HepG2 (cell line): ENCODE measurements at regions of chr5 and their contacts with region 1.

Region 1: DNA sequence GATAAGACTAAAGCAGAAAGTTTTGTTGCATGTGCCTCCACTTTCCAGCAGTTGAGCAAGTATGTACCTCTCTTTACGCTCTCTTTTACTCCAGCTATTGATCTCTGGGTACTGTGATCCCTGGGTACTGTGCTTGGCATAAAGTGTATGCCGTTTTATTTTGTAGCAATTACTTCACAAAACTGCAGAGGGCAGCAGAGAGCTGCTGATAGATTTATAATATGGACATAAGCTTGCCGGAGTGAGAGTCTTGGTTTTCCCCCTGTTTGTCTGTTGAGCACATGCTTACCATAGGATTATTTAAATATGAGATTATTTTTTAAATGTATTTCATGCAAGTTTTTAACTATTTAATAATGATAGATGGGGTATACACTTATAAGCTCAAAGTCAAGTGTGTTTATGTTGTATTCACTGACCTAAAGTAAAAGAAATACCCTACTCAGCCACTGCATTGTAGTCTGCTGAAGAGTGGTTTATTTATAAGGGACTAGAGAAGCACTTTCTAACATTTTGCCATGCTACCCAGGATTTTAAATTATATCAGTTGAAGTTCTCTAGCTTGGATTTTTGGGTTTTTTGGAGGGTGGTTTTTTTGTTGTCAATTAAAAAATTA is 13.0 kb downstream of the TTC1 start:
- DNase-seq: peak; percentile 61
- ATAC-seq: peak; percentile 94
- H3K4me3 ChIP-seq: no peak overlapping the region
- H3K27ac ChIP-seq: no peak overlapping the region
- H3K4me1 ChIP-seq: no peaks in the 10 kb centered on the region
- H3K27me3 ChIP-seq: no peaks in the 10 kb centered on the region
- CTCF ChIP-seq: peak; percentile 73
- EP300 ChIP-seq: no peak
- POLR2A ChIP-seq: no peak
- RAD21 ChIP-seq: peak; percentile 48

Region 2: GRCh38 chr5:159987031-159987674 is 34.8 kb before region 1 on chr5:
- CTCF ChIA-PET with region 1: no interaction called
- POLR2A ChIA-PET with region 1: no interaction called
- in situ Hi-C with region 1: no loop called
- intact Hi-C with region 1: no loop called
- DNase-seq: peak; percentile 34
- ATAC-seq: peak; percentile 99
- H3K4me3 ChIP-seq: peak overlapping the region; percentile 45 to 69 (median 56); a peak in 5 of 6 replicates
- H3K27ac ChIP-seq: no peak overlapping the region
- H3K4me1 ChIP-seq: no peaks in the 10 kb centered on the region
- H3K27me3 ChIP-seq: peaks cover 0 to 48% of the 10 kb centered on the region in 2 experiments; a peak in 4 of 5 replicates
- CTCF ChIP-seq: peak; percentile 96
- EP300 ChIP-seq: no peak
- POLR2A ChIP-seq: no peak
- RAD21 ChIP-seq: peak; percentile 83

Region 3: GRCh38 chr5:160199410-160199911 is 177.5 kb after region 1 on chr5:
- CTCF ChIA-PET with region 1: interaction called, 3 read pairs
- POLR2A ChIA-PET with region 1: no interaction called
- in situ Hi-C with region 1: no loop called
- intact Hi-C with region 1: loop called (anchors 5 kb)
- DNase-seq: no peak
- ATAC-seq: peak; percentile 98
- H3K4me3 ChIP-seq: peak overlapping the region in 2 of 3 experiments; percentile 39 to 50; a peak in 4 of 6 replicates
- H3K27ac ChIP-seq: no peak overlapping the region
- H3K4me1 ChIP-seq: peaks cover 13% of the 10 kb centered on the region; the same call in 1 of the 2 replicates
- H3K27me3 ChIP-seq: peaks cover 3 to 11% of the 10 kb centered on the region in 2 experiments; a peak in 3 of 5 replicates
- CTCF ChIP-seq: peak; percentile 83
- EP300 ChIP-seq: no peak
- POLR2A ChIP-seq: no peak
- RAD21 ChIP-seq: peak; percentile 94

Region 4: DNA sequence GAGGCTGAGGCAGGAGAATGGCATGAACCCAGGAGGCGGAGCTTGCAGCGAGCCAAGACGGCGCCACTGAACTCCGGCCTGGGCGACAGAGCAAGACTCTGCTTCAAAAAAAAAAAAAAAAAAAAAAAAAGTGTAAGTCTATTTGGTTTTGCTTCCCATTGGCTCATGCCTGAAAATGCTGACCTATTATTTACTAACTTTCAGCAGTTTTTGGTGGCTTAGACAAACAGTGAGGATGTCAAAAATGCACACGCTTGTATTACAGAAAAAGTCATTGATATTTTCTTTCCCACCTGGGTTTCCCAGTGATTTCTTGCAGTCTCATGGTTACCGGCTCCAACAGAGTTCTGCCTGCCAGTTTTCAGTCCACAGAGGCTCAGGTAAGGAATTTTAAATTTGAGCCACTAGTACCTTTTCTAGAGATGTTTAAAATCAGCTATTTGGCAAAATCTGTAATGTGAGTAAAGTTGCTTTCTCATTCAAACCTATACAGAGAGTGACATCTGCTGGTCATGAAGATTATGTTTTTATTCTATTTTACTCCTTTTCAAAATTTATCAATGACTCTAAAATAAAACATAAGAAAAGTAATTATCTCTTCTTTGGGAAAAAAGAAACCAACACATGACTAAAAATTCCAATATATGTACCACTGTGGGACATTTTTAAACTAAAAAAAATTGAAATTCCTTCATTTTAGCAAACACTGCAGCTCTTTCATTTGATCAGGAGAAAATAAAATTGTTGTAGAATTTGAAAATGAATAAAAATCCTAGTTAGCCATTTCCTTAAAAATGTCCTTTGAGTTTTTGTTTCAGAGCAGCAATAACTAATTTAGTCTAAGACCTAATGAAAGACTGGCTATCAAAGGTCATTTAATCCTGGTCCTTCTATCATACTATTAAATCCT is 369.1 kb after region 1 on chr5:
- CTCF ChIA-PET with region 1: interaction called, 3 read pairs
- POLR2A ChIA-PET with region 1: no interaction called
- in situ Hi-C with region 1: no loop called
- intact Hi-C with region 1: loop called (anchors 1 kb)
- DNase-seq: peak; percentile 23
- ATAC-seq: no peak
- H3K4me3 ChIP-seq: no peak overlapping the region
- H3K27ac ChIP-seq: no peak overlapping the region
- H3K4me1 ChIP-seq: no peaks in the 10 kb centered on the region
- H3K27me3 ChIP-seq: no peaks in the 10 kb centered on the region
- CTCF ChIP-seq: peak; percentile 25; the same call in 1 of the 2 replicates
- EP300 ChIP-seq: no peak
- POLR2A ChIP-seq: no peak
- RAD21 ChIP-seq: no peak